Ascending aorta (tissue), 2 donors: ENCODE measurements at regions of chr5 and their contacts with region 1.

Region 1: GRCh38 chr5:159156426-159157238 is 52.7 kb downstream of the RNF145 start:
- DNase-seq: no peak
- H3K4me3 ChIP-seq: no peak overlapping the region
- H3K27ac ChIP-seq: peak overlapping the region in 1 of 2 donors; percentile 4
- H3K4me1 ChIP-seq: peaks cover 0 to 4% of the 10 kb centered on the region in 2 donors
- H3K27me3 ChIP-seq: no peaks in the 10 kb centered on the region
- CTCF ChIP-seq: peak; percentile 75 to 82 (median 78)

Region 2: GRCh38 chr5:159133041-159133741 is 23.4 kb before region 1 on chr5:
- intact Hi-C with region 1: no loop called
- DNase-seq: peak in 1 of 2 donors; percentile 74
- H3K4me3 ChIP-seq: peak overlapping the region; percentile 29 to 34
- H3K27ac ChIP-seq: peak overlapping the region; percentile 65 to 80
- H3K4me1 ChIP-seq: no peaks in the 10 kb centered on the region
- H3K27me3 ChIP-seq: no peaks in the 10 kb centered on the region
- CTCF ChIP-seq: peak; percentile 66 to 90 (median 72)

Region 3: GRCh38 chr5:159262859-159263567 is 106.4 kb after region 1 on chr5 and contains the start of gene UBLCP1:
- intact Hi-C with region 1: loop called (anchors 2 kb)
- DNase-seq: peak; percentile 25 to 84
- H3K4me3 ChIP-seq: peak within 1 kb of the TSS; percentile 86 to 91
- H3K27ac ChIP-seq: peak within 1 kb of the TSS; percentile 88 to 94
- H3K4me1 ChIP-seq: peaks cover 0 to 10% of the 10 kb centered on the region in 2 donors
- H3K27me3 ChIP-seq: no peaks in the 10 kb centered on the region
- CTCF ChIP-seq: no peak
- total RNA-seq, gene UBLCP1: 11.0 TPM

Region 4: DNA sequence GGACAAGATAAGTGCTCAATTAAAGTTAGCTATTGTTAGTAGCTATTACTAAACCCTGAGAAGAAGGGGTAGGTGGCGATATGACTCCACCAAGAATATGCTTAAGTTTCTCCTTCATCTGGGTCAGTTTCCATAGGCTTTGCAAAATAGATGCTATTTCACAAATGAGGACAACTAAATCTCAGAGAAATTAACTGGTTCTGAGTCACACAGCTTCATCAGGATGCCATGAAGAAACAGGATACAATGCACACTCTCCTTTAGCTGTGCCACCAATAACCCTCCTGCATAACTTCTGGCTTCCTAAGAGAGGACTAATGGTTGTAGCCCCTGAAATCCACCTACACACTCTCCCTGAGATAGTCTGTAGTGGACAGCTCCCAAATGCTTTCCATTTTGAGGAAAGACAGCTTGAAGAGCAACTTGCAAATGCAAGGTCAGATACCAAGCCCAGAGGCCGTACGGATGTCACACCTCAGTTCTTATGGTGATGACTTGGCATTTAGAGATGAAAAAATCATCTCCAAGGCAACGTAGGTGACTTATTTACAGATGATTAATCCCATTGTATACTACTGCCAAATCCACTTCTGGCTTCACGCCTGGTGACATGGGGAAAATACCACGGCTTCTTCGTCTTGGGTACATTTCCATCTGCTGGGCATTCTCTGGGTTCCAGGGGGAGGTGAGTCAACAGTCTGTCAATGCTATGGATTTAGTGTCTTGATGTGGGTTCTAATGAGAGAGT is 425.0 kb after region 1 on chr5:
- intact Hi-C with region 1: no loop called
- DNase-seq: peak in 1 of 2 donors; percentile 72
- H3K4me3 ChIP-seq: no peak overlapping the region
- H3K27ac ChIP-seq: no peak overlapping the region
- H3K4me1 ChIP-seq: no peaks in the 10 kb centered on the region
- H3K27me3 ChIP-seq: no peaks in the 10 kb centered on the region
- CTCF ChIP-seq: no peak

Region 5: GRCh38 chr5:159987031-159987674 is 830.5 kb after region 1 on chr5:
- intact Hi-C with region 1: loop called (anchors 10 kb)
- DNase-seq: peak in 1 of 2 donors; percentile 86
- H3K4me3 ChIP-seq: peak overlapping the region; percentile 54 to 74
- H3K27ac ChIP-seq: no peak overlapping the region
- H3K4me1 ChIP-seq: peaks cover 0 to 4% of the 10 kb centered on the region in 2 donors
- H3K27me3 ChIP-seq: no peaks in the 10 kb centered on the region
- CTCF ChIP-seq: peak; percentile 73 to 92 (median 75)